Astrocyte of the cerebellum (primary cell): ENCODE measurements at regions of chr2 and their contacts with region 1.

Region 1: GRCh38 chr2:219530048-219530963 is 13.3 kb downstream of the CHPF start:
- DNase-seq: peak; percentile 60
- H3K4me3 ChIP-seq: peak overlapping the region; percentile 23
- CTCF ChIP-seq: peak; percentile 93

Region 2: GRCh38 chr2:219245148-219245898 is 285.0 kb before region 1 on chr2 and contains the starts of genes GLB1L and STK16:
- in situ Hi-C with region 1: no loop called
- DNase-seq: peak; percentile 82
- H3K4me3 ChIP-seq: peak within 1 kb of the TSS; percentile 91
- CTCF ChIP-seq: no peak

Region 3: DNA sequence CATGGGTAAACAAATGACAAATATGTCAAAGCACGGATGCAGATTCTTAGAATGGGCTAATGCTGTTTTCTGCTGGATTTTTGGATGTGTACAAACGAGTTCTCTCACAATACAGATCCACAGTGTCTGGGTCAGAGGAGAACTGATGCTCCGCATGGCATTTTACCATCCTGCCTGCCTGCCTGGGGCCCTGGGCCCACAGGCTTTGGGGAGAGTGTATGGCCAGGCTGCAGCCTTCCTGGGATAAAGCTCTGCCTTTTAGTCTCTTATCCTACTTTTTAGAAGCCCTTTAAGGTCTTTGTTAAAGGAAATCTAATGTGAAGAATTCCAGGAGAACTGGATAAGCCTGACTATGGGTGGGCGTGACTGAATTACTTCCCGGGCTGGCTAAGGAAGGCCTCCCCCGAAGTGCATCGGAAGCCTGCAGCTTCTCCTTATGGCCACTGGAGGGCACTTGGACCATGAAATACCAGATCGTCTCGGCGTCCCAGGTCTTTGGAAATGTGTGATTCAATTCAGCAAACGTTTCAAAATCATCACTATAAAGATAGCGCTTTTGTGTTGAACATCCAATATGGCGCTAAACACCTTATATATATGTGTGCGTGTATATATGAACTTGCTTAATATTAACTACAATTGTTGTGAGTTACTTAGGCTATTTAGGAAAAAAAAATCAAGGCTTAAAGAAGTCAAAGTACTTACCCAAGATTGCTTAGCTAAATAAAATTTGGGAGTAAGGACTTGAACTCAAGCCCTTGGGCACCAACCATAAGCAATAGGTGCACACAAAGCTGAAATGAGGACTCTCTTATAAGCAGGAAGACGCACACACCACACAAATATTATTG is 127.4 kb before region 1 on chr2:
- in situ Hi-C with region 1: loop called (anchors 25 kb)
- DNase-seq: peak; percentile 80
- H3K4me3 ChIP-seq: no peak overlapping the region
- CTCF ChIP-seq: peak; percentile 96

Region 4: DNA sequence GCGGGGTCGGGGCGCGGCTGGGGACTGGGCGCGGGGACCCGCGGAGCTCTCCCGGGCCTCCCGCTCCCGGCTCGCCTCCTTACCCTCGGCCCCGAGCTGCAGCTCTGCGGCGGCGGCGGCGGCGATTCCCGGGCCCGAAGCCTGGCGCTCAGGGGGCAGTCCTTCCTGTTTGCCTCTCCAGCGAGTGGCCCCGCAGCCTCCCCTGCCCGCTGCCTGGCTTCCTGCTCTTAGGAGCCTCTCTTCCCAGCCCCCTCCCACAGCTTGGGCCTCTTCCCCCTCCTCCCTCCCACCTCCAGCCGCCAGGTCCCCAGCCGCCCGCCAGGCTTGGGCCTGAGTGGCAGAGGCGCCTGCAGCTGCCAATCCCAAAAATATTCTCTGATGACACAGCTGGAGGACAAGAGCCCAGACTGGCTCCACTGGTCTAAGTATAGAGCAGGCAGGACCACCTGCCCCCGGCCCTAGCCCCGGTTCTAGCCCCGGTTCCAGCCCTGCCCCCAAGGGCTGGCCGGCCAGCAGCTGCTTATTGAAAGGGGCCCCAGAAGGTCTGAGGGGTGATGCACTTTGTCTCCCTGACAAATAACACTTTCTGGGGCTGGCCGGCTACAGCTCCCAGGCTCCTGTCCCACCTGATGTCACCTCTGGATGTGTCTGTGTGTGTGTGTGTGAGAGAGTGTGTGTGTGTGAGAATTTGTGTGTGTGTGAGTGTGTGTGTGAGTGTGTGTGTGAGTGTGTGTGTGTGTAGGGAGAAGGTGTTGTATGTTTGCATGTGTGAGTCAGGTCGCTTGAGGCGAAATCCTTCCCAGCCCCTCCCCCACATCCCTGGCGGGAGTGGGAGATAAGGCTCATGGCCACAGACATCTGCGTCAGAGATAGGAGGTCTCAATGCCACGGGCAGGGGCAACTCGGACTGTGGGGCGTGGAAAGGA is 41.3 kb after region 1 on chr2 and contains the start of gene OBSL1:
- in situ Hi-C with region 1: no loop called
- DNase-seq: peak; percentile 34
- H3K4me3 ChIP-seq: peak within 1 kb of the TSS; percentile 58
- CTCF ChIP-seq: no peak